Posterior vena cava (tissue), 2 donors: ENCODE measurements at regions of chr12 and their contacts with region 1.

Region 1: DNA sequence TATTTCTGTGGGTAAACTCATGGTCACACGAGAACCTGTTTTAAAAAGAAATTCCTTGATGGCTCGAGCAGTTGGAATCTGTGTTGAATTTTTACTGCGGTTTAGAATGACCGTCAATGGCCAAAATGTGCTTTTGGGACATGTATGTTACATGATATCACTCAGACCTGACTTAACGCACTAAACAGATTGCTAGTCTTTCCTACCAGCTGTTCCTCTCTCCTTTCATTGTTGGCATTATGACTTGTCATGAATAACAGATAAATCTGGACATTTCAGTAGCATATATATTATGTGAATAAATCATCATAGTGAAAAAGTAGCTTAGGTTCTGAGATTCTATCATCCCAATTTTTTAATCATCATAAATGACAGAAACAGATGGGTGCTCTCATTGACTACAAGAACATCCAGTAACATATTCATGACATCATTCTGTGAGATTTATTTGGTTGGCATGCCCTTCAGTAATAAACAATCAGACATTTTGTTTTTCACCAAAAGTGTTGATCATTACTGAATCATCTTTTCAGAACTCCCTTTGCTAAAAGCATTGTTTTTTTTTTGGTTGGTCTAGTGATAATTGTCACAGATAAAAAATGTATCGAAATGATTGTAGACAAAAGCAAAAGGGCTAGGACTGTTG is 57.9 kb upstream of the NAV3 start:
- DNase-seq: no peak

Region 2: DNA sequence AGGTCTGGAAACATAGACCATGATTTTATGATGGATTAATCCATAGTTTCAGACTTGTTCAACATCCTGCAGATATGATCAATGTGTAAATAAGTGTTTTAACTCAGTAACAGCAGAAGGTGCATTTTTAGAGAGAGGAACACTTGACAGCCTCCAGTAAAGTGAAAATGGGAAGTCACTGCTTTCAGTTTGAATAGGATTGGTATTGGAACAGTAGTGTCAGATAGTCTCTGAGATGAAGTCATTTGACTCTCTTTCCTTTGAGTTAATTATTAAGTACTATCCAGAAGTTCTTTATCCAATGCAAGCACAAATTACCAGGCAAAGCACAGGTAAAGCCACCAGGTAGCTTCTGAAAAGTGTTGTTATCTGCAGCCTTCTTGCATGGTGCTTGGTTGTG is 43.4 kb after region 1 on chr12:
- intact Hi-C with region 1: loop called in 1 of 2 experiments (anchors 1 kb)
- DNase-seq: no peak